ENCODE measurements at regions of chr9 and their contacts with region 1.

Region 1: DNA sequence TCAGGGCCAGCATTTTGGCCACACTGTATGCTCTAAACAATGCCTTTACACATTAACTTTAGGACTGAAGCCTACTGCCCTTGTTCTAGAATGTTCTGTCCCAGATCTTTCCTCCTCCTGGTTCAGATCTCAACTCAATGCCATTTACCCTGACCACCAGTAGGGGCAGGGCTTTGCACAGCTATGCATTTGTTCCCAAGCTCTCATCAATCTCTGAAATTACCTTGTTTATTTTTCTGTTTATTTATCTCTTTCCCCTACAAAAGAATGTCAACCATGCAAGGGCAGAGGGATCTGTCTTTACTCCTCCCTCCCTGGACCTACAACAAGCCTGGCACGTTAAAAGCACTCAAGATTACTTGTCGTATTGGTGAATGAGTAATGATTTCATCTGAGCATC is 612.9 kb downstream of the BNC2 start:
- DNase-seq: peak; percentile 10
- H3K4me3 ChIP-seq: no peak overlapping the region
- H3K27ac ChIP-seq: no peak overlapping the region
- H3K4me1 ChIP-seq: no peaks in the 10 kb centered on the region
- H3K27me3 ChIP-seq: peaks cover 0 to 1% of the 10 kb centered on the region in 2 experiments
- CTCF ChIP-seq: peak; percentile 36 to 60
- POLR2A ChIP-seq: no peak

Region 2: GRCh38 chr9:16671591-16672137 is 414.1 kb after region 1 on chr9:
- CTCF ChIA-PET with region 1: no interaction called
- POLR2A ChIA-PET with region 1: no interaction called
- dilution Hi-C with region 1: no loop called
- intact Hi-C with region 1: no loop called
- DNase-seq: no peak
- H3K4me3 ChIP-seq: no peak overlapping the region
- H3K27ac ChIP-seq: no peak overlapping the region
- H3K4me1 ChIP-seq: no peaks in the 10 kb centered on the region
- H3K27me3 ChIP-seq: no peaks in the 10 kb centered on the region
- CTCF ChIP-seq: no peak
- POLR2A ChIP-seq: no peak

Region 3: GRCh38 chr9:16959391-16959790 is 701.8 kb after region 1 on chr9:
- CTCF ChIA-PET with region 1: no interaction called
- POLR2A ChIA-PET with region 1: no interaction called
- dilution Hi-C with region 1: no loop called
- intact Hi-C with region 1: loop called (anchors 5 kb)
- DNase-seq: no peak
- H3K4me3 ChIP-seq: no peak overlapping the region
- H3K27ac ChIP-seq: no peak overlapping the region
- H3K4me1 ChIP-seq: no peaks in the 10 kb centered on the region
- H3K27me3 ChIP-seq: no peaks in the 10 kb centered on the region
- CTCF ChIP-seq: no peak
- POLR2A ChIP-seq: no peak